ENCODE measurements at regions of chr9 and their contacts with region 1.

Region 1: DNA sequence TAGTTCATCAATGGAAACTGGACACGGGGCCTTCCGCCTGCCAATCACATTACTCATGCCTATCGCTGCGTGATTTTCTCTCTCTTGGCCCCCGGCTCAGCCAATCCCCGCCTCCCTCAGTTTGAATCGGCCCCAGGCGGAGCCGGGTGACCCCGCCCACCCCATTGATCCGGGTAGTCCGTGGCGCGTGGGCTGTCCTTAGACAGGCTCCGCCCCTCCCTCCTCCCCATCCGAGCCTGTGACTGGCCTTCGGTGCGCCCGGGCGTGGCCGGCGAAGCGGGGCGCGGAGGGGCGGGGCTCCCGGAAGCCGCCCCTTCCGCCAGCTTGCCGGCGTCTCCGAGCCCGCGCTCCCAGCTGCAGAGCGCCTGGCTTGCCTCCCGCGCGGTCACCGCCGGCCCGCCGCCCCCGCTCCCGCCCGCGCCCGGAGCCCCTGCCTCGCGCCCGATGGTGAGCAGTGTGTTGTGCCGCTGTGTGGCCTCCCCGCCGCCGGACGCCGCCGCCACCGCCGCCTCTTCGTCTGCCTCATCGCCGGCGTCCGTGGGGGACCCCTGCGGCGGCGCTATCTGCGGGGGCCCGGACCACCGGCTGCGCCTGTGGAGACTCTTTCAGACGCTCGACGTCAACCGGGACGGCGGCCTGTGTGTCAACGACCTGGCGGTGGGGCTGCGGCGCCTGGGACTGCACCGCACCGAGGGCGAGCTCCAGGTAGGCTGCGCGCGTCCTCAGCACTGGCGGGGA is at the start of gene SLC25A25:
- DNase-seq: peak; percentile 98
- ATAC-seq: peak; percentile 79
- H3K4me3 ChIP-seq: peak within 1 kb of the TSS; percentile 95
- H3K27ac ChIP-seq: peak within 1 kb of the TSS; percentile 96
- H3K4me1 ChIP-seq: peaks cover 36% of the 10 kb centered on the region
- H3K27me3 ChIP-seq: no peaks in the 10 kb centered on the region
- CTCF ChIP-seq: no peak
- total RNA-seq, gene SLC25A25: 25.2 and 37.0 TPM in 2 replicates

Region 2: GRCh38 chr9:127734747-127735529 is 333.1 kb before region 1 on chr9 and contains the start of gene TOR2A:
- CTCF ChIA-PET with region 1: no interaction called
- POLR2A ChIA-PET with region 1: no interaction called
- intact Hi-C with region 1: no loop called
- DNase-seq: peak; percentile 93
- ATAC-seq: peak; percentile 96
- H3K4me3 ChIP-seq: peak within 1 kb of the TSS; percentile 84
- H3K27ac ChIP-seq: peak within 1 kb of the TSS; percentile 39
- H3K4me1 ChIP-seq: peaks cover 8% of the 10 kb centered on the region
- H3K27me3 ChIP-seq: no peaks in the 10 kb centered on the region
- CTCF ChIP-seq: peak; percentile 86
- total RNA-seq, gene TOR2A: 12.2 and 14.1 TPM in 2 replicates

Region 3: GRCh38 chr9:127828262-127829031 is 239.6 kb before region 1 on chr9:
- CTCF ChIA-PET with region 1: no interaction called
- POLR2A ChIA-PET with region 1: no interaction called
- intact Hi-C with region 1: no loop called
- DNase-seq: peak; percentile 36
- ATAC-seq: peak; percentile 80
- H3K4me3 ChIP-seq: peak overlapping the region; percentile 48; the same call in 1 of the 2 replicates
- H3K27ac ChIP-seq: no peak overlapping the region
- H3K4me1 ChIP-seq: 0 out of 2 replicates have a peak, but pooled peaks cover 3% of the 10 kb centered on the region
- H3K27me3 ChIP-seq: no peaks in the 10 kb centered on the region
- CTCF ChIP-seq: no peak

Region 4: DNA sequence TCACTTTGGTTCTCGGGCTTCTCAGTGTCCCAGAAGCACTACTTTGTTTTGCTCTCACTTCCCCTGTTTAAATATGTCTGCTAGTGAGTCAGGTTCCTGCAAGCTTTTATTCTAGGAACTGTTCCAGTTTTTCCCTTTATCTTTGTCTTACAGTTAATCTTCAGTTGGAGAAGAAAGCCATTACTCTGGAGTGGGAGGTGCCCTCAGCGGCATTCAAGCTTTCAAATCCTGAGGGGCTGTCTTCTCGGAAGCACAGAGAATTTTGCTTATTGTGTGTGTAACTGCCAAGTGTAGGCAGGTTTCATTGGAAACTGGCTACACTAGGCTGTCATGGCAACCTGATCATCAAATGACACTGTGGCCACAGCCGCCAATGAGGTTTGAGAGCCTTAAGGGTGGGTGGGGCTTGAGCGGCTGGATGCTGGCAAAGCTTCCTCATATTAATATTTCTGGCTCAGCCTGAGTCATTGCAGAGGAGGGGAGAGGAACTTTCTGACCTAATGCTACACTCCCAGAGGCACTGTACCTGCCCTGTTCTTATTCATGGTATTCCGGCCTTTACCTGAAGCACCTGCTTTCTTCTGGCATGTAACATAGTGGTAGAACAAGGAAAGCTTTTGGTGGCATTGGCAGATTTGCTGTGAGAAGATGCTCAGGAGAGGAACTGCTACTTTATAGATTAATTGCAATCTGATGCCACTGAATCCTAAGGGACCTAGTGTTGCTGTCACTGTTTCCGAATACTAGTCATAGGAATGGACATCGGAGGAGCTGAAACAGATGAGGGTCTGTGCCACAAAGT is 26.3 kb after region 1 on chr9:
- CTCF ChIA-PET with region 1: no interaction called
- POLR2A ChIA-PET with region 1: interaction called, 3 read pairs
- intact Hi-C with region 1: loop called (anchors 2 kb)
- DNase-seq: peak; percentile 96
- ATAC-seq: peak; percentile 75
- H3K4me3 ChIP-seq: peak overlapping the region; percentile 59
- H3K27ac ChIP-seq: peak overlapping the region; percentile 90
- H3K4me1 ChIP-seq: peaks cover 40% of the 10 kb centered on the region
- H3K27me3 ChIP-seq: no peaks in the 10 kb centered on the region
- CTCF ChIP-seq: no peak

Measured in PC-3 (cell line).